ENCODE measurements at regions of chr15 and their contacts with region 1.

Region 1: GRCh38 chr15:84992157-84992944 is 10.7 kb downstream of the PDE8A start:
- DNase-seq: peak; percentile 76
- ATAC-seq: peak; percentile 89
- H3K4me3 Mint-ChIP-seq: no peak overlapping the region
- H3K27ac Mint-ChIP-seq: peak overlapping the region; percentile 21
- H3K4me1 Mint-ChIP-seq: peaks cover 48% of the 10 kb centered on the region
- H3K27me3 Mint-ChIP-seq: no peaks in the 10 kb centered on the region
- CTCF ChIP-seq: no peak

Region 2: DNA sequence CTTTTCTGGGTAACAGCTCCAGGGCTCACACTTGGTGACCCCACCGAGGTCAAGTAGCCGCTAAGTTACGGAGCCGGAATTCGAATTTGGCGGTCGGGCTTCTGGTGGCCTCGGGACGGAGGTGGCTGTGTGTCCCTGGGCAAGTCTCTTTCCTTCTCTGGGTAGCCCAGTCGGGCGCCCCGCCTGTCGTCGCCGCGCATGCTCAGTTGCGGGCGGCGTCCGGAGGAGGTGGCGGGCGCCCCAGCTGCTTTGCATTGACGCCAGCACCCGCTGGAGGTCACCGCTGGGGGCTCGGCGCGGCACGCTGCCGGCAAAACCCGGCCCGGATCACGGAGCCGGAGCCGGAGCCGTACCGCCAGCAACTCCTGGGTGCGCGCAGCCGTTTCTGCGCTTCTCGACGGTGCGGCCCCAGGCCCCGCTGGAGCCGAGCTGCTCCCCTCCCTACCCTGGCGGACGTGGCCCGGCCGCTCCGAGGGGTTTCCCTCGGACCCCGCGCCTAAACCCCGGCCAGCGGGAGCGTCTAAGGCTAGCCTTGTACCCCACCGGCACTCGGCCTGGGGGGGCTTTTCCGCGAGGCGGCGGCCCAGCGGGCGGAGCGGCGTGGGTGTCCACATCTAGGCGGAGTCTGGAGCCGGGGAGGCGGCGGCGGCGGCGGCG is 11.2 kb before region 1 on chr15:
- CTCF ChIA-PET with region 1: no interaction called
- POLR2A ChIA-PET with region 1: interaction called, 14 read pairs
- intact Hi-C with region 1: no loop called
- DNase-seq: peak; percentile 94
- ATAC-seq: peak; percentile 82
- H3K4me3 Mint-ChIP-seq: peak overlapping the region; percentile 86
- H3K27ac Mint-ChIP-seq: peak overlapping the region; percentile 95
- H3K4me1 Mint-ChIP-seq: peaks cover 42% of the 10 kb centered on the region
- H3K27me3 Mint-ChIP-seq: no peaks in the 10 kb centered on the region
- CTCF ChIP-seq: no peak

Measured in activated CD8-positive, alpha-beta T cell treated with anti-CD3 and anti-CD28 coated beads for 36 hours (primary cell).